ENCODE measurements at regions of chr5 and their contacts with region 1.

Region 1: GRCh38 chr5:139787568-139788293 is 7.9 kb upstream of the PSD2 start:
- DNase-seq: peak; percentile 88
- ATAC-seq: peak; percentile 91
- H3K4me3 ChIP-seq: peak overlapping the region; percentile 43 to 70 (median 62)
- H3K4me3 Mint-ChIP-seq: peak overlapping the region; percentile 93
- H3K27ac ChIP-seq: no peak overlapping the region
- H3K27ac Mint-ChIP-seq: peak overlapping the region; percentile 37
- H3K4me1 ChIP-seq: peaks cover 3 to 13% of the 10 kb centered on the region in 2 donors
- H3K4me1 Mint-ChIP-seq: peaks cover 10% of the 10 kb centered on the region
- H3K27me3 ChIP-seq: peaks cover 0 to 15% (median 4%) of the 10 kb centered on the region in 4 experiments
- H3K27me3 Mint-ChIP-seq: peaks cover 28% of the 10 kb centered on the region
- CTCF ChIP-seq: peak; percentile 97

Region 2: DNA sequence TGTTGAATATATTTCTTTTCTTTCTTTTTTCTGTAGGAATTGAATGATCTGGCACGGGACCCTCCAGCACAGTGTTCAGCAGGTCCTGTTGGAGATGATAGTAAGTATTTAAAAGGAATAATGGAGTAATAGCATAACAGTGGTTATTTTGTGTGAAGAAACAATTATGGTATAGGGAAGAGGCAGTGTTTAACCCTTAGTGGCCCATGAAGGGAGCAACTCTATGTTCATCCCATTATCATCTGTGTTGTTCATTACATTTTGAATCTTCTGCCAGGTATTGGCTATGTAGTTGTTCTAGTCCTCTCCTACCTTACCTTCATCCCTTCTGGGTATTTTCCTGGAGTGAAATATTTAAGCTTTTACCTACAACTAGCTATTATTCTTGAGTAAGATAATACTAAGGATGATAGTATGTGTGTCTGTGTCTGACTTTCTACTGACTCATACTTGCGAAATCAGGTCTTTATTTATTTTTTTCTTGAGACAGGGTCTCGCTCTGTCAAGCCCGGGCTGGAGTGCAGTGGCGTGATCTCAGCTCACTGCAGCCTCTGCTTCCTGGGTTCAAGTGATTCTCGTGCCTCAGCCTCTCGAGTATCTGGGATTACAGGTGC is 187.3 kb before region 1 on chr5:
- CTCF ChIA-PET with region 1: no interaction called
- POLR2A ChIA-PET with region 1: no interaction called
- intact Hi-C with region 1: no loop called
- DNase-seq: no peak
- ATAC-seq: no peak
- H3K4me3 ChIP-seq: no peak overlapping the region
- H3K4me3 Mint-ChIP-seq: no peak overlapping the region
- H3K27ac ChIP-seq: peak overlapping the region in 1 of 2 donors; percentile 43
- H3K27ac Mint-ChIP-seq: no peak overlapping the region
- H3K4me1 ChIP-seq: peaks cover 11 to 17% of the 10 kb centered on the region in 2 donors
- H3K4me1 Mint-ChIP-seq: peaks cover 22% of the 10 kb centered on the region
- H3K27me3 ChIP-seq: no peaks in the 10 kb centered on the region
- H3K27me3 Mint-ChIP-seq: no peaks in the 10 kb centered on the region
- CTCF ChIP-seq: no peak

Region 3: GRCh38 chr5:139733698-139734538 is 53.8 kb before region 1 on chr5:
- CTCF ChIA-PET with region 1: no interaction called
- POLR2A ChIA-PET with region 1: no interaction called
- intact Hi-C with region 1: no loop called
- DNase-seq: no peak
- ATAC-seq: no peak
- H3K4me3 ChIP-seq: no peak overlapping the region
- H3K4me3 Mint-ChIP-seq: no peak overlapping the region
- H3K27ac ChIP-seq: no peak overlapping the region
- H3K27ac Mint-ChIP-seq: no peak overlapping the region
- H3K4me1 ChIP-seq: peaks cover 0 to under 1% of the 10 kb centered on the region in 2 donors
- H3K4me1 Mint-ChIP-seq: peaks cover 2% of the 10 kb centered on the region
- H3K27me3 ChIP-seq: no peaks in the 10 kb centered on the region
- H3K27me3 Mint-ChIP-seq: no peaks in the 10 kb centered on the region
- CTCF ChIP-seq: no peak

Region 4: GRCh38 chr5:139774980-139775661 is 12.6 kb before region 1 on chr5:
- CTCF ChIA-PET with region 1: interaction called, 33 read pairs
- POLR2A ChIA-PET with region 1: no interaction called
- intact Hi-C with region 1: no loop called
- DNase-seq: peak; percentile 84
- ATAC-seq: peak; percentile 98
- H3K4me3 ChIP-seq: peak overlapping the region in 3 of 5 experiments; percentile 1 to 26 (median 6)
- H3K4me3 Mint-ChIP-seq: peak overlapping the region; percentile 64
- H3K27ac ChIP-seq: no peak overlapping the region
- H3K27ac Mint-ChIP-seq: peak overlapping the region; percentile 41
- H3K4me1 ChIP-seq: peaks cover 7 to 13% of the 10 kb centered on the region in 2 donors
- H3K4me1 Mint-ChIP-seq: peaks cover 15% of the 10 kb centered on the region
- H3K27me3 ChIP-seq: peaks cover 0 to 5% (median 0%) of the 10 kb centered on the region in 4 experiments
- H3K27me3 Mint-ChIP-seq: peaks cover 14% of the 10 kb centered on the region
- CTCF ChIP-seq: peak; percentile 94

Region 5: GRCh38 chr5:139844472-139845145 is 56.9 kb after region 1 on chr5:
- CTCF ChIA-PET with region 1: interaction called, 44 read pairs
- POLR2A ChIA-PET with region 1: no interaction called
- intact Hi-C with region 1: loop called (anchors 1 kb)
- DNase-seq: peak; percentile 83
- ATAC-seq: peak; percentile 26
- H3K4me3 ChIP-seq: no peak overlapping the region
- H3K4me3 Mint-ChIP-seq: peak overlapping the region; percentile 17
- H3K27ac ChIP-seq: no peak overlapping the region
- H3K27ac Mint-ChIP-seq: peak overlapping the region; percentile 64
- H3K4me1 ChIP-seq: peaks cover 8 to 16% of the 10 kb centered on the region in 2 donors
- H3K4me1 Mint-ChIP-seq: peaks cover 15% of the 10 kb centered on the region
- H3K27me3 ChIP-seq: peaks cover 0 to 36% (median 18%) of the 10 kb centered on the region in 4 experiments
- H3K27me3 Mint-ChIP-seq: peaks cover 30% of the 10 kb centered on the region
- CTCF ChIP-seq: peak; percentile 85

Region 6: DNA sequence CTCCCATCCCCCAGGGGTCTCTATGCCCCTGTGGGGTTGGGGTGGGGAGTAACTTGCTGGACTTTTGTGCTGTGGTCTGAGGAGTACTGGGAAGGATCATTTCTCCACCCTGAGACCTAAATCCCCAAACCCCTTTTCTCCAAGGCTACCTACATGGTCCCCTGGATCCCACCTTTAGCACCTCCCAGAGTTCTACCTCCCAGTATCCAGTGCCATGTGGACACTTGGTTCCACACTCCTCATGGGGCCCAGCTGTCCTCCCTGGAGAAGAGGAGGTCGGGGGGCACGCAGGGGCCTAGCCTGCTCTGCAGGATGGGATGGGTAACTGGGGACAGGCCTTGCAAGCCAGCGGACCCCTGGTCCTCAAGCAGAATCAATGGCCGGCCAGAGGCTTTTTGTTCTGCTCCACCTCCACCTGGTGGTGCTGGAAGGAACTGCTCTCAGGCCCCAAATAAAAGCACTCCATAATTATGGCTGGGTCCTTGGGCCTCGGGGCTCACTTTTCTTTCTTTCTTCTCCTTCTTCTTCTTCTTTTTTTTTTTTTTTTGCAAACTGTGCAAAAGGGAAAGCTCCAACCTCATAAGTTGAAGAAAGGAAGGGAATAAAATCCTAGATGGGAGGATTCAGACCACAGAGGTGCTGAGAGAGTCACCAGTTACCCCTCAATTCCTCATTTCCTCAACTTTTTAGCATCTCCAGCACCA is 76.3 kb after region 1 on chr5:
- CTCF ChIA-PET with region 1: interaction called, 117 read pairs
- POLR2A ChIA-PET with region 1: no interaction called
- intact Hi-C with region 1: no loop called
- DNase-seq: peak; percentile 73
- ATAC-seq: peak; percentile 85
- H3K4me3 ChIP-seq: no peak overlapping the region
- H3K4me3 Mint-ChIP-seq: no peak overlapping the region
- H3K27ac ChIP-seq: no peak overlapping the region
- H3K27ac Mint-ChIP-seq: no peak overlapping the region
- H3K4me1 ChIP-seq: peaks cover 0 to 3% of the 10 kb centered on the region in 2 donors
- H3K4me1 Mint-ChIP-seq: peaks cover 7% of the 10 kb centered on the region
- H3K27me3 ChIP-seq: peaks cover 0 to 6% (median 1%) of the 10 kb centered on the region in 4 experiments
- H3K27me3 Mint-ChIP-seq: peaks cover 23% of the 10 kb centered on the region
- CTCF ChIP-seq: peak; percentile 92

Region 7: DNA sequence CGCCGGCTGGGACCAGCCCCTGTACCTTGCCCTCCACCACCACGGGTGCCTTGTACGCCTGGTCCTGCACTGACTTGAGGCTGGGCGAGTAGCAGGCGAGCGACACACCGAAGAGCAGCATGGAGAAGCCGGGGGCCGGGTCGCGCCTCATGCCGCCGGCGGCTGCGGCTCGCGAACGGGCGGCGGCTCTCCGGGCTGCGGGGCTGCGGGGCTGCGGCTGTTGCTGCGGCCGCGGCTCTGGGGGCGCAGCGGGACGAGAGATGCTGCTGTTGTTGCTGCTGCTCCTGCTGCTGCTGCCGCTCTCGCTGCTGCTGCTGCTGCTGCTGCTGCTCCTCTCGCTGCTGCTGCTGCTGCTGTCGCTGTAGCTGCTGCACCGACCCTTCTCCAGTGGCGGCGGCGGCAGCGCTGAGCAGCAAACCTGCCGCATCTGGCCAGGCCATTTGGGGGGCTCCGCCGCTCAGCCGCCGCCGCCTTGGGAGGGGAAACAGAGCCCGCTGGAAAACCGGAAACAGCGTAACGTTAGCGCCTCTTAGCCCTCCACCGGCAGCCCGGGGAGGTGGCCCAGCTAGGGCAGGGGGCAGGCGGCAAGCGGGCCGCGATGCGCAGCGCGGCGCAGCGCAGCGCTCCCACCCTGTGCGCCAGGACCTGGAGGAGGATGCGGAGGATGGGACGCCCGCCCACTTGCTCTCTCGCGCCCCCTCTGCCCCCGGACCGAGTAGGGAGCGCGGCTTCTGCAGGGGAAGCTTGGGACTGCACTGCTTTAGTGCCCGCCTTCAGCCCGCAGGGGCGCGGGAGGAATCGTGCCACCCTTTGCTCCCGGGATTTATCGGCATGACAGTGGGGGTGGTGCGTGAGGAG is 255.1 kb after region 1 on chr5 and contains the start of gene NRG2:
- CTCF ChIA-PET with region 1: no interaction called
- POLR2A ChIA-PET with region 1: no interaction called
- intact Hi-C with region 1: no loop called
- DNase-seq: peak; percentile 74
- ATAC-seq: peak; percentile 86
- H3K4me3 ChIP-seq: peak within 1 kb of the TSS in 4 of 5 experiments; percentile 44 to 61 (median 54)
- H3K4me3 Mint-ChIP-seq: peak within 1 kb of the TSS; percentile 84
- H3K27ac ChIP-seq: no peak within 1 kb of the TSS
- H3K27ac Mint-ChIP-seq: no peak within 1 kb of the TSS
- H3K4me1 ChIP-seq: peaks cover 26 to 27% of the 10 kb centered on the region in 2 donors
- H3K4me1 Mint-ChIP-seq: peaks cover 27% of the 10 kb centered on the region
- H3K27me3 ChIP-seq: peaks cover 2 to 60% (median 43%) of the 10 kb centered on the region in 4 experiments
- H3K27me3 Mint-ChIP-seq: peaks cover 53% of the 10 kb centered on the region
- CTCF ChIP-seq: peak; percentile 60
- total RNA-seq, gene NRG2: 0.15 and 0.22 TPM in 2 replicates

Region 8: DNA sequence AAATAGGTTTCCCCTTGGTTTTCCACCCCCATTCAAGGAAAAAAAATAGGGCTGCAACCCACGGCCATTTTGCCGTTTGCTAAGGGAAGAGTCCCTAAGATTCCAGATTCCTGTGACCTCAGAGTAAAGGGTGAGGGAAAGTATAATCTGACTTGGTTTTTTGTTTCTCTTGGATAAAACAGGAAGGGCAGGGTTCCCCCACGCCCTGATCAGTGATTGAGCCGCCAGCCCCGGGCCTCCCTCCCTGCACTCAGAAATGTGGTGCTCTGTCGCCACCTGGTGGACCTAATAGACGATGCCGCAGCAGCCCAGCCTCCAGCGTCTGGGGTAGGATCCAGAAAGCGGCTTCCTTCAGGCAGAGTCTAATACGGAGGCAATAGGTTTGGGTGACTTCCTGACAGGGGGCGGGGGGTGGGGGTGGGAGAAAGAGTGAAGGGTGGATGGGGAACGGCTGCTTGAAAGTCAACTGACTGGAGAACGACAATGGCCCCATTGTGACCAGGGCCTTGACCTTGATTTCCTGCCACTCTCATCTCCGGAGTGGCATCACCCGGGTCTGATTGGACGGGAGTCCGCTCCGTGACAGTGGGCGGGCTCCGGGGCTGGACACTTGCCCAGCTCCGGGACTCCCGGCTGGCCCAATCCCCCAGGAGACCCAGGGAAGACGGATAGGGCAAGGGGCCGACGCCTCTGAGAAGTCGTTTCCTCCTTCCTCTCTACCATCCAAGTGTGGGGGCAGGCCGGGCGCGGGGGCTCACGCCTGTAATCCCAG is 369.5 kb after region 1 on chr5:
- CTCF ChIA-PET with region 1: interaction called, 10 read pairs
- POLR2A ChIA-PET with region 1: no interaction called
- intact Hi-C with region 1: loop called (anchors 1 kb)
- DNase-seq: peak; percentile 89
- ATAC-seq: peak; percentile 100
- H3K4me3 ChIP-seq: peak overlapping the region in 3 of 5 experiments; percentile 1 to 26 (median 20)
- H3K4me3 Mint-ChIP-seq: peak overlapping the region; percentile 68
- H3K27ac ChIP-seq: no peak overlapping the region
- H3K27ac Mint-ChIP-seq: no peak overlapping the region
- H3K4me1 ChIP-seq: peaks cover 7 to 17% of the 10 kb centered on the region in 2 donors
- H3K4me1 Mint-ChIP-seq: peaks cover 9% of the 10 kb centered on the region
- H3K27me3 ChIP-seq: no peaks in the 10 kb centered on the region
- H3K27me3 Mint-ChIP-seq: no peaks in the 10 kb centered on the region
- CTCF ChIP-seq: peak; percentile 88

Measured in B cell (primary cell).